ENCODE measurements at regions of chr17 and their contacts with region 1.

Region 1: GRCh38 chr17:72151565-72152391 is 31.0 kb downstream of the SOX9 start:
- DNase-seq: peak in 1 of 2 donors; percentile 22
- ATAC-seq: peak; percentile 56 to 58
- H3K4me3 ChIP-seq: no peak overlapping the region
- H3K27ac ChIP-seq: peak overlapping the region in 2 of 4 donors; percentile 0 to 41
- H3K4me1 ChIP-seq: peaks cover 0 to 5% of the 10 kb centered on the region in 2 donors
- H3K27me3 ChIP-seq: no peaks in the 10 kb centered on the region
- CTCF ChIP-seq: no peak
- POLR2A ChIP-seq: no peak

Region 2: GRCh38 chr17:72407336-72407909 is 255.6 kb after region 1 on chr17:
- in situ Hi-C with region 1: loop called in 1 of 4 experiments (anchors 25 kb)
- intact Hi-C with region 1: no loop called
- DNase-seq: no peak
- ATAC-seq: no peak
- H3K4me3 ChIP-seq: no peak overlapping the region
- H3K27ac ChIP-seq: no peak overlapping the region
- H3K4me1 ChIP-seq: peaks cover 0 to 3% of the 10 kb centered on the region in 2 donors
- H3K27me3 ChIP-seq: no peaks in the 10 kb centered on the region
- CTCF ChIP-seq: no peak
- POLR2A ChIP-seq: no peak

Measured in gastrocnemius medialis (tissue), 4 donors.